Naive thymus-derived CD8-positive, alpha-beta T cell (primary cell): ENCODE measurements at regions of chr12 and their contacts with region 1.

Region 1: GRCh38 chr12:8949342-8950220 is at the start of gene M6PR:
- DNase-seq: peak; percentile 79 to 96 (median 86)
- ATAC-seq: peak; percentile 78 to 80
- H3K4me3 Mint-ChIP-seq: peak within 1 kb of the TSS; percentile 91 to 97 (median 95)
- H3K27ac Mint-ChIP-seq: peak within 1 kb of the TSS; percentile 91 to 99 (median 94)
- H3K4me1 Mint-ChIP-seq: peaks cover 43 to 75% (median 65%) of the 10 kb centered on the region in 4 donors
- H3K27me3 Mint-ChIP-seq: no peaks in the 10 kb centered on the region
- polyA plus RNA-seq, gene M6PR: 228 to 260 (median 238) TPM

Region 2: DNA sequence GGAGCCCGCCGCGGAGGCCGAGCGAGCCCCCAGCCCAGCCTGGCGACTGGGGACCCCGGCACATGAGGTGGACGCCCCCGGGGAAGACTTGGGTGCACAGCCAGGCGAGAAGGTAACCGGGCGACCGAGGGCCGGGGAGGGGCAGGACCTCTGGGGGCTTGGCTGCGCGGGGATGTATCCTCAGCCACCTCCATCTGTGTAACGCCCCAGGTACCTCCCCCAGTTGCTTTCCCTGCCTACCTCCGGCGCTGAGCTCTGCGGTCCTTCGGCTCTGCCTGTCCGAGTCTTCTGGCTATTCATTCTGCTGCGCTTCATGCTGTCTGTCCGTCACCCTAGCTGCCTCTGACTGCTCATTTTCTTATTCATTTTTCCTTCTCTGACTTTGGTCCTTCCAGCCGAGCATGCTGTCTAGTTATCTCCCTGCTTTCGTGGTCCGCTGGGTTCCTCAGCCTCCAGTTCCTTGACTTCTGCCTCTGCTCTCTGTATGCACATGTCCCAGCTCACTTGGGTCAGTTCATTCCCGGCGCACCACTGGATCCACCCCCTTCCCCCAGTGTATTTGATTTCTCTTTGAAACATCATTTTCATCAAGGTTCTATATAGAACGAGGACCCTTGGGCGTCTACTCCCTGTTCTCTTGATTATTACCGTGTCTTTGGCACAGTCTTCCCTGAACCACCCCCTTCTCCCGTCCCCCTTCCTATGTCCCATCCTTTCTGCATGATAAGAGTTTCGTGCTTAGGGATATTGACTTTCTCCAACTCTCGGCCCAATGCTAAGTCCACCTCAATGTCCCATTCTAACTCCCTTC is 34.7 kb before region 1 on chr12:
- POLR2A ChIA-PET with region 1: interaction called, 28 read pairs
- DNase-seq: peak; percentile 34 to 76 (median 58)
- ATAC-seq: peak; percentile 83 to 91
- H3K4me3 Mint-ChIP-seq: no peak overlapping the region
- H3K27ac Mint-ChIP-seq: no peak overlapping the region
- H3K4me1 Mint-ChIP-seq: peaks cover 9 to 23% (median 14%) of the 10 kb centered on the region in 4 donors
- H3K27me3 Mint-ChIP-seq: no peaks in the 10 kb centered on the region

Region 3: DNA sequence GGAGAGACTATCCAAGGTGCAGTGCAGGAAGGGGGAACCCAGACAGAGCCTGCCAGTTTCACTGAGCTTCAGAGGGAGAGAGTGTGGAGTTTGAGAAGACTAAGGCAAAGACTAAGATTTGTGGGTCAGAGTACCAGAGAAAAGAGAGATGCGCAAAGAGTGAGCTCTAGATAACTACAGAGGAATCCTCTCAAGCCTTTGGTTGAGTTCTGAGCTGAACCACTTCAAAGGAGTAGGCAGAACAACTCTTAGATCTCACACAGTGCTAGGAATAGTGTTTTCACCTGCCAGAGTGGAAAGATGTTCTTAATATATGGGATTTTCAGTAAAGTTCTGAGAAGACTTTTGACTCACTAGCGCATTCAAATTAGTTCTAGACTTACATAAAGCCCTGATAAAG is 10.6 kb after region 1 on chr12:
- POLR2A ChIA-PET with region 1: interaction called, 11 read pairs
- DNase-seq: peak in 5 of 10 donors; percentile 29 to 60 (median 36)
- ATAC-seq: peak; percentile 99
- H3K4me3 Mint-ChIP-seq: peak overlapping the region; percentile 7 to 75 (median 56)
- H3K27ac Mint-ChIP-seq: peak overlapping the region; percentile 61 to 91 (median 84)
- H3K4me1 Mint-ChIP-seq: peaks cover 23 to 72% (median 60%) of the 10 kb centered on the region in 4 donors
- H3K27me3 Mint-ChIP-seq: no peaks in the 10 kb centered on the region

Region 4: DNA sequence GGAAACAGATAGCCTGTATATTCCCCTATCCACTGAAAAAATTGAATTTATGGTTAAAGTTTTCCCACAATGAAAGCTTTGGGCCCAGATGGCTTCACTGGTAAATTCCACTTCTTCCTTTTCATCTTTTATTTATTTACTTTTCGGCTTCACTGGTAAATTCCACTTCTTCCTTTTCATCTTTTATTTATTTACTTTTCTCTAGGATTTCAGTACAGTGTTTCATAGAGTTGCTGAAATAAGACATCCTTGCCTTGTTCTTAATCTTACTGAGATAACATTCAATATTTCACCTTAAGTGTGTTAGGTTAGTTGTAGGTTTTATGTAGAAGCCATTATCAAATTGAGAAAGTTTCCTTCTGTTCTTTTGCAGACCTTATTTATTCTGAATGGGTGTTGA is 20.8 kb after region 1 on chr12:
- POLR2A ChIA-PET with region 1: no interaction called
- DNase-seq: no peak
- ATAC-seq: no peak
- H3K4me3 Mint-ChIP-seq: no peak overlapping the region
- H3K27ac Mint-ChIP-seq: peak overlapping the region in 7 of 10 donors; percentile 17 to 87 (median 50)
- H3K4me1 Mint-ChIP-seq: peaks cover 0 to 18% (median 9%) of the 10 kb centered on the region in 4 donors
- H3K27me3 Mint-ChIP-seq: no peaks in the 10 kb centered on the region

Region 5: GRCh38 chr12:9027161-9028059 is 77.8 kb after region 1 on chr12:
- POLR2A ChIA-PET with region 1: interaction called, 47 read pairs
- DNase-seq: no peak
- ATAC-seq: no peak
- H3K4me3 Mint-ChIP-seq: peak overlapping the region in 9 of 10 donors; percentile 7 to 71 (median 40)
- H3K27ac Mint-ChIP-seq: peak overlapping the region in 7 of 10 donors; percentile 76 to 96 (median 86)
- H3K4me1 Mint-ChIP-seq: peaks cover 12 to 48% (median 31%) of the 10 kb centered on the region in 4 donors
- H3K27me3 Mint-ChIP-seq: no peaks in the 10 kb centered on the region

Region 6: DNA sequence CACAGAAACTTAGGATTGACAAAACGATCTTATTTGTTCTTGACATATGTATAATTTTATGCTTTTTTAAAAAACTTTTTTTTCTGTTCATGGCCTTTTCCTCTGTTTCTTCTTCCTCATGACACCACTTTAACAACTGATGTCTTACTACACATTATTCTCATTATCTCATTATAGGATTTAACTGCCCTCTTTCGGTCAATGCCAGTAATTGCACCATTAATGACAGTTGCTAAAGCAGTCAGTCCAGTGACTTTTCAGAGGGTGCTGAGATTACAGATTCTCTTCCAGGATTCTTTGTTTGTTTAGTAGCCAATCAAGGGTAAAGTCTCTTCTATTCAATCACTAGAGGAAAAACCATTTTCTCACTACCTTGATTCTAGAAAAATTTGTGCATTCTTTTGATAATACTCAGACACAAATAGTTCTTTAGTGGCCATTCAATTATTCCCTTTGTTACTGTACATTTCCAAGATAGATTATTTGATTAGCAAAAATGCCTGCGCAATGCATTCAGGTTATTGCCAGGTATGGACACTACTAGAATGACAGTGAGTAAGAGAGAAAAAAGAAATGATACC is 89.9 kb after region 1 on chr12:
- POLR2A ChIA-PET with region 1: interaction called, 51 read pairs
- DNase-seq: peak in 5 of 10 donors; percentile 24 to 72 (median 66)
- ATAC-seq: peak; percentile 78 to 84
- H3K4me3 Mint-ChIP-seq: peak overlapping the region in 5 of 10 donors; percentile 6 to 16 (median 11)
- H3K27ac Mint-ChIP-seq: peak overlapping the region; percentile 4 to 88 (median 40)
- H3K4me1 Mint-ChIP-seq: peaks cover 15 to 48% (median 40%) of the 10 kb centered on the region in 4 donors
- H3K27me3 Mint-ChIP-seq: no peaks in the 10 kb centered on the region

Region 7: GRCh38 chr12:9049520-9050133 is 100.0 kb after region 1 on chr12:
- POLR2A ChIA-PET with region 1: interaction called, 11 read pairs
- DNase-seq: peak in 6 of 10 donors; percentile 29 to 66 (median 50)
- ATAC-seq: peak; percentile 81 to 85
- H3K4me3 Mint-ChIP-seq: no peak overlapping the region
- H3K27ac Mint-ChIP-seq: peak overlapping the region in 2 of 10 donors; percentile 35 to 65
- H3K4me1 Mint-ChIP-seq: peaks cover 3 to 19% (median 12%) of the 10 kb centered on the region in 4 donors
- H3K27me3 Mint-ChIP-seq: no peaks in the 10 kb centered on the region